AG04450 (cell line): ENCODE measurements at regions of chr10 and their contacts with region 1.

Region 1: GRCh38 chr10:30534465-30535144 is 94.9 kb downstream of the LYZL2 start:
- DNase-seq: peak; percentile 38
- H3K4me3 ChIP-seq: no peak overlapping the region
- H3K27ac ChIP-seq: no peak overlapping the region
- H3K27me3 ChIP-seq: peaks cover 5% of the 10 kb centered on the region
- CTCF ChIP-seq: peak; percentile 89

Region 2: GRCh38 chr10:30392564-30392990 is 142.0 kb before region 1 on chr10:
- CTCF ChIA-PET with region 1: interaction called, 18 read pairs
- POLR2A ChIA-PET with region 1: no interaction called
- DNase-seq: peak; percentile 15
- H3K4me3 ChIP-seq: 0 out of 2 replicates have a peak overlapping the region, but pooled peaks have one; percentile 7
- H3K27ac ChIP-seq: no peak overlapping the region
- H3K27me3 ChIP-seq: peaks cover 24% of the 10 kb centered on the region
- CTCF ChIP-seq: peak; percentile 94

Region 3: GRCh38 chr10:30413996-30414576 is 120.5 kb before region 1 on chr10:
- CTCF ChIA-PET with region 1: interaction called, 10 read pairs
- POLR2A ChIA-PET with region 1: no interaction called
- DNase-seq: no peak
- H3K4me3 ChIP-seq: no peak overlapping the region
- H3K27ac ChIP-seq: no peak overlapping the region
- H3K27me3 ChIP-seq: peaks cover 3% of the 10 kb centered on the region
- CTCF ChIP-seq: peak; percentile 86